ENCODE measurements at regions of chr1 and their contacts with region 1.

Region 1: DNA sequence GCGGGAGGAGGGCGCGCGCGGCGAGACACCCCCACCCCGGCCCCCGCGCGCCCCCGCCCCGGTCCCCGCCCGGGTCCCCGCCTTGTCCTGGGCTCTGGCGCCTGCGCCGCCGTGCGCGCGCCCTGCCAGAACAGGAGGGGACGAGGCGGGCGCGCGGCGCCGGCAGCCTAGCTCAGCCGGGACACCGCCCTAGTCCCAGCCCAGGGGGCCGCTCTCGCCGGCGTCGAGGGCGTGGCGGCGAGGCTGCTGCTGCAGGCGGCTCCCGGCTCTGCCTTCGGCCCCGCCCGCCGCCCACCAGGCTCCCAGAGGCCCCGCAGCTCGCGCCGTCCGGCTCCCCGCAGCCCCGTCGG is at the start of gene RCAN3:
- DNase-seq: peak; percentile 92
- ATAC-seq: peak; percentile 81
- H3K4me3 Mint-ChIP-seq: peak within 1 kb of the TSS; percentile 97
- H3K27ac Mint-ChIP-seq: peak within 1 kb of the TSS; percentile 98
- H3K4me1 Mint-ChIP-seq: peaks cover 58% of the 10 kb centered on the region
- H3K27me3 Mint-ChIP-seq: no peaks in the 10 kb centered on the region
- CTCF ChIP-seq: no peak
- total RNA-seq, gene RCAN3: 55.3 to 56.8 TPM

Region 2: DNA sequence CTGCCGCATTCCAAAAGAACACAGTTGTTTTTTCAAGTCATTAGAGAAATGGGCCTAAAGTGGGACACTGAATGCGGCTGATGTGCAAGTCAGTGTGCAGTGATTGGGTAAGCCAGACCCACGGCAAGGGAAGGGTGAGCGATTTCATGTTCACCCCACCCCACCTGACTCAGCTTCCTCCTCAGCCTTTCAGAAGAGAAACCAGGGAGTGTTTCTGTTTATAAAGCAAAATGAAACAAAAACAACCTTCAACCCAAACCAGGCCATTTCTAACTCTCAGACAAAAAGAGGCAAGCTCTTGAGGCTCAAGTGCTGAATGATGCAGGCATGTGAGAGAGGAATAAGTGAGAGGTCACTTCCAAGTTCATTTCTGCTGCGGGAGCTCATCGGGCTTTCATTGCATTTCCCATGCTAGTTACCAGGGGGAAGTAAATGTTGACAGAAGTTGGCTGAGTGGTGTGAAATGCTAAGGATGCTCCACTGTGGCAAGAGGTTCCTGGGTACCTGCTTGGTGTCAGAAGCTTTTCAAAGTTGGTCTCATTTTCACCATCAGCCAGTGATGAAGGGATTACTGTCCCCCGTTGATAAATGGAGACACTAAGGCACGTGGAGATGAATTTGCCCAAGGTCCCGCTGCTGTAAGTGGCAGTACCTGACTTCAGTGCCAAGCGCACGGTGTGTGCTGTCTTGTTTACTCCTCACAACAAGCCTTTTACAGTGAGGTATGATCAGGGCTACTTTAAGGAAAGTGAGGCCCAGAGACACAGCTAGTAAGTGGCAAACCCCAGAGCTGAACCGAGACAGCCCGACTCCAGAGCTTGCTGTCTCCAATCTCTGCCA is 118.2 kb before region 1 on chr1:
- CTCF ChIA-PET with region 1: no interaction called
- POLR2A ChIA-PET with region 1: no interaction called
- intact Hi-C with region 1: no loop called
- DNase-seq: peak; percentile 71
- ATAC-seq: peak; percentile 90
- H3K4me3 Mint-ChIP-seq: no peak overlapping the region
- H3K27ac Mint-ChIP-seq: peak overlapping the region; percentile 5
- H3K4me1 Mint-ChIP-seq: peaks cover 26% of the 10 kb centered on the region
- H3K27me3 Mint-ChIP-seq: no peaks in the 10 kb centered on the region
- CTCF ChIP-seq: no peak

Region 3: DNA sequence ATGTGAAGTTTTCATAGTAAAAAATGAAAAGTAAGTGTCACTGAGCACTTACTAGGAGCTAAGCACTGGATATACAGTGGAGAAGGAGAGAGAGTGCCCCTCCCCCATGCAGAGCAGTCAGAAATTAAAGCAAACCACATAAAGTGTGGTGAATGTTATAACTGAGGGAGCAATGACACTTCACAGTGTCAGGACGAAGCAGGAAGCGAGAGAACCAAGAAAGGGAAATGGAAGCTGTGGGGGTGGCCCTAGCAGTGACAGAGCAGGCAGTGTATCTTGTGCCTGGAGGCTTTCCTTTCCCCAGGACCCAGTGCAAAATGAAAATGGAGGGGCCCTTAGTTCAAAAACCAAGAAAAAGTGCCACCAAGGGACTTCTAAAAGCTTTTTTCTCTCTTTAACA is 21.6 kb before region 1 on chr1:
- CTCF ChIA-PET with region 1: interaction called, 30 read pairs
- POLR2A ChIA-PET with region 1: interaction called, 47 read pairs
- intact Hi-C with region 1: no loop called
- DNase-seq: peak; percentile 80
- ATAC-seq: peak; percentile 75
- H3K4me3 Mint-ChIP-seq: peak overlapping the region; percentile 59
- H3K27ac Mint-ChIP-seq: peak overlapping the region; percentile 97
- H3K4me1 Mint-ChIP-seq: peaks cover 58% of the 10 kb centered on the region
- H3K27me3 Mint-ChIP-seq: no peaks in the 10 kb centered on the region
- CTCF ChIP-seq: no peak

Region 4: DNA sequence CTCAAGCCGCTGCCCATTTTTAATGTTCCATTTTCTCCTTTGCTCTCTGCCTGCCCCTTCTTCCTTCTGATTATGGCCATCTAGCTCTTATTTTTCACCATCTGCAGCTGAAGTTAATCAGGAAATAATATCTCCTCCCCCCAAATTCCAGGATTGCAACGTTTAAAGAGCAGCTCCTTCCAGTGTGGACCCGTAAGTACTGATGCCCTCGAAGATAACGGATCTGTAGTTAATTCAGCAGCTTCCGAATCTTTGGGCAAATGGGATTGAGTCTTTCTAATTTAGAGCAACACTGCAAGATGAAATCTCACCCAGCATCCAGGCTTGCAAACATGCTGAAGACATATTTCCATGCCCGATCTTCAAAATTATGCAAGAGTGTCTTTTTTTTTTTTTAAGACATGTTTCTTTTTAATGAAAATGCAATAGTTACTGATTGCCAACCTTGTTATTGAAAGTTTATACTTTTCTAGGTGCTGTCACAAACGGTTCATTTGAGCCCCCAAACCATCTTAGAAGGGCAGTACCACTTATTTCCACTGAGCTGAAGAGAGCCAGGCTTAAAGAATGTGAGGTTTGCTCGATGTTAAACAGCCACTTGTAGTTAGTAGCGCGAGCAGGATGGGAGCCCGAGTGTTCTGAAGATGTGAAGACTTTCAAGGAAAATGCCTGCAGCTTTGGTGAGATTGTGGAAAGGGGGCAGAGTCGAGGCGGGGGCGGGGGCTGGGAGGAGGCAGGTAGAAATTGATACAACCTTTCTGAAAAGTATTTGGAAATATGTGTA is 10.9 kb before region 1 on chr1:
- CTCF ChIA-PET with region 1: interaction called, 30 read pairs
- POLR2A ChIA-PET with region 1: interaction called, 47 read pairs
- intact Hi-C with region 1: no loop called
- DNase-seq: no peak
- ATAC-seq: no peak
- H3K4me3 Mint-ChIP-seq: no peak overlapping the region
- H3K27ac Mint-ChIP-seq: no peak overlapping the region
- H3K4me1 Mint-ChIP-seq: peaks cover 42% of the 10 kb centered on the region
- H3K27me3 Mint-ChIP-seq: no peaks in the 10 kb centered on the region
- CTCF ChIP-seq: peak; percentile 31

Region 5: GRCh38 chr1:24526940-24527542 is 24.4 kb after region 1 on chr1:
- CTCF ChIA-PET with region 1: interaction called, 66 read pairs
- POLR2A ChIA-PET with region 1: interaction called, 16 read pairs
- intact Hi-C with region 1: no loop called
- DNase-seq: peak; percentile 70
- ATAC-seq: peak; percentile 65
- H3K4me3 Mint-ChIP-seq: no peak overlapping the region
- H3K27ac Mint-ChIP-seq: peak overlapping the region; percentile 55
- H3K4me1 Mint-ChIP-seq: peaks cover 57% of the 10 kb centered on the region
- H3K27me3 Mint-ChIP-seq: no peaks in the 10 kb centered on the region
- CTCF ChIP-seq: peak; percentile 82

Region 6: GRCh38 chr1:24541711-24542346 is 39.1 kb after region 1 on chr1:
- CTCF ChIA-PET with region 1: interaction called, 6 read pairs
- POLR2A ChIA-PET with region 1: interaction called, 12 read pairs
- intact Hi-C with region 1: loop called (anchors 5 kb)
- DNase-seq: peak; percentile 45
- ATAC-seq: no peak
- H3K4me3 Mint-ChIP-seq: no peak overlapping the region
- H3K27ac Mint-ChIP-seq: peak overlapping the region; percentile 84
- H3K4me1 Mint-ChIP-seq: peaks cover 60% of the 10 kb centered on the region
- H3K27me3 Mint-ChIP-seq: no peaks in the 10 kb centered on the region
- CTCF ChIP-seq: peak; percentile 83